Gastrocnemius medialis (tissue), 4 donors: ENCODE measurements at regions of chr12 and their contacts with region 1.

Region 1: DNA sequence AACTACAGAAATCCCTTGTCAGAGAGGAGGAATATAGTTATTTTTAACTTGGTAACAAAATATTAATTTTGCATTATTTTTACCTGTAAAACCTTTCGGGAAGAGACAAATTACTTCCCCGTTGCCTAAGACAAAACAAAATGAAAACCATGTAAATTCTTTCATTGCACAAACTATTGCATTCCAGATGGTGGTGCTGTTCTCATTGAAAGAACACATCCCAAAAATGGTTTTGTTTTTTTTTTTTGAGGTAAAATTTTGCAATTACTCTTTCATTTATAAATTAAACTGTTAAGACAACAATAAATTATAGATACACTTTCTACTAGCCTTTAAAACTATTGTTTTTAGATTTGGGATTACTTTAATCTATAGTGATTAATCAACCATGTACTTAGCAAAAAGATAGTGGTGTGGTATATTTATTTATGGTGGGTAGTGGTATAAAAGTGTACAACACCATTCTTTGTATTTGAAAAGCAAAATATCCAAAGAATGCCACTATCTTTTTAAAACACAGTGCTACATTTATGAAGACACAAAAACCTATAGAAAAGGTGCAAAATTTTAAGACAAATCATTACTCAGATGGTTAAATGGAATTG is 115.5 kb downstream of the SLC38A1 start:
- DNase-seq: no peak
- ATAC-seq: no peak
- H3K4me3 ChIP-seq: no peak overlapping the region
- H3K27ac ChIP-seq: no peak overlapping the region
- H3K4me1 ChIP-seq: no peaks in the 10 kb centered on the region
- H3K27me3 ChIP-seq: no peaks in the 10 kb centered on the region
- CTCF ChIP-seq: peak in 3 of 5 experiments; percentile 25 to 55 (median 48)
- POLR2A ChIP-seq: no peak

Region 2: DNA sequence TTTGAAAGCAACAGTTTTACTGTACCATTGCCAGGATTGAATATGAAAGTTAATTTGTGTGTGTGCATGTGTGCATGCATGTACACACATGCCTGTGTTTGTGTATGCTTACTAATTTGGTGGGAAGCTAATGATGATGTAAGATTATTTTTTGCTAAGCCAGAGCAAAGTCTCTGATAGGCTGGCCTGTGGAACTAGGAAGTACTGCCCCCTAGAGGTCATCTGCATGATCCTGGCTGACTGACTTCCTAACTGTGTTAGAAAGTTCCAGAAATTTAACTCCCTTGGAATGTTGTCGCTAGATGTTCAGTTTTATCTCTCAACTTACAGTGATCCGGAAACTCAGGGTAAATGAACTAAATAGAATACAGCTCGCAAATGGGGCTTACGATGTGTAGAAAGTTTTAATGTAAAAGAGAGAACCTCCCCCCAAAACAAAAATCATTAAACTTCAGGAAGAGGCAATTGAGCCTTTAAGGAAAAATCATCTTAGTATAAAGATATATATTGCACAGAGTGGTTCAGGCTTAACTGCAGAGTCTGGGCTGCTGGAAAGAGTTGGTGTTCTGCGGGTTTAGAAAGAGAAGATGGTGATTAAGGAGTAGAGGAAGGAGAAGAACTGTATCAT is 149.8 kb after region 1 on chr12:
- in situ Hi-C with region 1: no loop called
- intact Hi-C with region 1: loop called (anchors 2 kb)
- DNase-seq: peak in 1 of 2 donors; percentile 19
- ATAC-seq: peak; percentile 39 to 84
- H3K4me3 ChIP-seq: no peak overlapping the region
- H3K27ac ChIP-seq: no peak overlapping the region
- H3K4me1 ChIP-seq: no peaks in the 10 kb centered on the region
- H3K27me3 ChIP-seq: no peaks in the 10 kb centered on the region
- CTCF ChIP-seq: peak; percentile 44 to 68 (median 51)
- POLR2A ChIP-seq: no peak

Region 3: GRCh38 chr12:46419675-46420074 is 266.3 kb after region 1 on chr12:
- in situ Hi-C with region 1: no loop called
- intact Hi-C with region 1: no loop called
- DNase-seq: no peak
- ATAC-seq: no peak
- H3K4me3 ChIP-seq: no peak overlapping the region
- H3K27ac ChIP-seq: no peak overlapping the region
- H3K4me1 ChIP-seq: peaks cover 6 to 8% of the 10 kb centered on the region in 2 donors
- H3K27me3 ChIP-seq: no peaks in the 10 kb centered on the region
- CTCF ChIP-seq: no peak
- POLR2A ChIP-seq: no peak

Region 4: DNA sequence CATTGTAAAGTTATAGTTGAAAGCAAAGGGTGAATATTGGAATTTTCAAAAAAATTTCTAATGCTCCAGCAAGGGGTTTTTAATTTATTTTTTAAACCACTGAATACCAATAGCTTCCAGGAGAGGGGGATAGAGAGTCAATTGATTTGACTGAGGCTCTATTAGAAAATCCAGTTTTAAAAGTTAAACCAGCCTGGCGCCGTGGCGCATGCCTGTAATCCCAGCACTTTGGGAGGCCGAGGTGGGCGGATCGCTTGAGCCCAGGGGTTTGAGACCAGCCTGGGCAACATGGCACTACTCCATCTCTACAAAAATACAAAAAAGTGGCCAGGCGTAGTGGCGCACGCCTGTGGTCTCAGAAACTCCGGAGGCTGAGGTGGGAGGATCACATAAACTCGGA is 522.4 kb after region 1 on chr12:
- in situ Hi-C with region 1: loop called in 2 of 4 experiments (anchors 25 kb)
- intact Hi-C with region 1: loop called (anchors 10 kb)
- DNase-seq: no peak
- ATAC-seq: no peak
- H3K4me3 ChIP-seq: no peak overlapping the region
- H3K27ac ChIP-seq: no peak overlapping the region
- H3K4me1 ChIP-seq: peaks cover 27 to 38% of the 10 kb centered on the region in 2 donors
- H3K27me3 ChIP-seq: no peaks in the 10 kb centered on the region
- CTCF ChIP-seq: peak; percentile 60 to 77 (median 72)
- POLR2A ChIP-seq: no peak

Region 5: DNA sequence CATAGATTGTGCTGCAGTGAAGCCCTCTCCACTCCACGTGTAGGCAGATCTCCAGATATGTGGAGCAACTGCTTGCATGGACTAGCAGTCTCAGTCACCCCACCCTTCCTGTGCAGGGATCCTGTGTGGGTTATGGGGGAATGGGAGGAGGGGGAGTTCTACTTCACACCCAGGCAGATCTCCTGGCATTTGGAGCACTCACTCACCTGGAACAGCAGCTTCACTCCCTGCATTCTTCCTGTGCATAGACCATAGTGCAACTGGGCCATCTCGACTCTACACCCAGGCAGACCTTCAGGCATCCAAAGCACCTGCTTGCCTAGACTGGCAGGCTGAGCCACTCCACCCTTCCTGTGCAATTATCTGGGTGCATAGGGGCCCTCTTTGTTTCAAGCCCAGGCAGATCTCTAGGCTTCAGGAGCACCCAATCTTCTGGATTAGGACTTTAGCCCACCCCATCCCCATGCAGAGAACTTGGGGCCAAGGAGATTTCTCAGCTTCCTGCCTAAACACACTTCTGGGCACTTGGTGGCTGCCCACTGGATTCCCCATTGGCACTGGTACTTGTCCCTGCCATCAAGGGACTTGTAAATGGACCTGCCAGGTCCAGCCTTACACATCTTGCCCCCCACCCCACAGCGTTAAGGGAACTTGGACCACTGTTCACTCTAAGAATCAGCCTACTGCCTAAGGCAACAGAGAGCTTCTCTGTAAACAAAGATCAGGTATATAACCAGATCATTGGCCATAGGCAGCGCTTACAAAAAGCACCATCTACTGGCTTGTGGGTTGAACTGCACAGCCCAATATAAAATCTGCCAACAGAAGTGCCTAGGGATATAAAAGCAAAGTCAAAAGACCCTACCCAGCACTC is 830.3 kb after region 1 on chr12:
- in situ Hi-C with region 1: loop called in 1 of 4 experiments (anchors 25 kb)
- intact Hi-C with region 1: no loop called
- DNase-seq: peak in 1 of 2 donors; percentile 36
- ATAC-seq: peak; percentile 98 to 99
- H3K4me3 ChIP-seq: no peak overlapping the region
- H3K27ac ChIP-seq: peak overlapping the region in 1 of 4 donors; percentile 17
- H3K4me1 ChIP-seq: peaks cover 3 to 10% of the 10 kb centered on the region in 2 donors
- H3K27me3 ChIP-seq: no peaks in the 10 kb centered on the region
- CTCF ChIP-seq: peak; percentile 73 to 85 (median 78)
- POLR2A ChIP-seq: no peak